Ovary (tissue), 10 donors: ENCODE measurements at regions of chr4 and their contacts with region 1.

Region 1: GRCh38 chr4:106502106-106502699 is 133.6 kb upstream of the GIMD1 start:
- DNase-seq: peak; percentile 14 to 58 (median 31)
- H3K4me3 ChIP-seq: no peak overlapping the region
- H3K27ac ChIP-seq: no peak overlapping the region
- H3K4me1 ChIP-seq: no peaks in the 10 kb centered on the region
- H3K27me3 ChIP-seq: no peaks in the 10 kb centered on the region
- CTCF ChIP-seq: peak in 1 of 3 donors; percentile 7
- EP300 ChIP-seq: no peak
- POLR2A ChIP-seq: no peak

Region 2: DNA sequence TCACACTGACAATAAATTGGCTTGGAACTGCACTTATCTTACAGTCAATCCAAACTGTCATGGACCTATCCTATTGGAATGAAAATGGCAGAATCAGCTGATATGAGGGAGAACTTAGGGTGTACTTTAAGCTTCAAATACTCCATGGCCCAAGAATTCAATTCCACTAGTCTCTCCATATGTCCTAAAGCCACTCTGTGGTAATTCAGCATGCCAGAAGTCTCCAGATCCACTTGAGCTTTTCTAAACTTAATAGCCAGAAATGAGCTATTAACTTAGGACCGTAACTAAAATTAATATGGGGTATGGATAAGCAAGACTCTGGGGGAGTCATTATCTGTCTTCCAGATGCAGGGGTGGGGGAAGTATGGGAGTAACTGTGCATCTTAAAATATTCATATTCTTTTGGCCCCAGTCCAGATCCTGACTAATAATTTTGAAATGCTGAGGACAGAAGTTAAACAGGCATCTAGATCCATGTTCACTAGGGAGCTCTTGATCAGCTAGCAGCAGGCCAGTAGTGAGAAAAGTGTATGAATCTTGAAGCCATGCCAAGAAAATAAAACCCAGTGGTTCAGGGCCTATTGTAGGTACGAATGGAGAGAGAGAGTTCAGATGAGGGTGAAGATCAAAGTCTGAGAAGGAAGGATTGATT is 366.3 kb after region 1 on chr4:
- intact Hi-C with region 1: loop called in 1 of 4 experiments (anchors 10 kb)
- DNase-seq: no peak
- H3K4me3 ChIP-seq: no peak overlapping the region
- H3K27ac ChIP-seq: no peak overlapping the region
- H3K4me1 ChIP-seq: no peaks in the 10 kb centered on the region
- H3K27me3 ChIP-seq: no peaks in the 10 kb centered on the region
- CTCF ChIP-seq: no peak
- EP300 ChIP-seq: no peak
- POLR2A ChIP-seq: no peak